ENCODE measurements at regions of chr16 and their contacts with region 1.

Region 1: DNA sequence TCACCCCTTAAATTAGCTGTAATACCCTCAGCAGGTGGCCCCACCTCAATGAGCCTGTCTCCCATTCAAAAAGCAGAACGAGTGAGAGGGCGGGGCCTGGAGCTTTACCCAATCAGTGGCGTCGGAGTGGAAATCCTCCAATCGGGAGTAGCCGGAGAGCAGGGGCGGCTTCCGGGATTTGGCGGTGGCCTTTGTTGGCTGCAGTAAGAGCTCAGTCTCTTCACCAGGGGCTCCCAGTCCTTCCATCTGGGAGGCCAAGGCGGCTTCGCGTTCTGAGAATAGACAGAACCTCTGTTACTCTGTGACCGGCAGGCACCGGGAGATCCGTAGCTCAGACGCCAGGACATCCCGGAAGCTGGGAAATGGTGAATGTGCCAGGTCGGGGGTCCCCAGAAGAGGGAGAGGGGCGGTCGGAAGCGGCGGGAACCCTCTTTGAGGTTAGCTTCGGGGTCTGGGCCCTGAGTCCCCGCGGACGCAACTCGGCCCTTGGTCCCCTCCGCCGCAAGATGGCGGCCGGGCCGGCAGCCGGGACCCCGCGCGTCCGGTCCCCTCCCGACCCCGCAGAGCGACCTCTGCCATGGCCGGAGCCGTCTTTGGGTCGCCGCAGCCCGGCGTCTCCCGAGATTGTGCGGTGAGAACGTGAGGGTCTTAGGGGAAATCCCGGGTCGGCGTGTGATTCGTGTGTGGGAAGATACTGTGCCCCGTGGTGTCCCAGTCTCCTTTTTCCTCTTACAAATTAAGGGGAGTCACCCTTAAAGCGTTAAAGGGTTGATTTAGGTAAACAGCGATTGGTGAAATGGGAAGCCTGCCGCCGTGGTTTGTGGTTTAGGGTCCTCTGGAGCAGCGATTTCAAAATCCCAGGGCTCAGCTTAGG is 160.3 kb upstream of the ZNF267 start:
- DNase-seq: peak; percentile 91
- ATAC-seq: peak; percentile 96
- H3K4me3 ChIP-seq: peak overlapping the region; percentile 66
- H3K27ac ChIP-seq: peak overlapping the region; percentile 70
- H3K4me1 ChIP-seq: peaks cover 6% of the 10 kb centered on the region
- H3K27me3 ChIP-seq: no peaks in the 10 kb centered on the region
- CTCF ChIP-seq: no peak
- POLR2A ChIP-seq: peak; percentile 98
- RAD21 ChIP-seq: no peak

Region 2: DNA sequence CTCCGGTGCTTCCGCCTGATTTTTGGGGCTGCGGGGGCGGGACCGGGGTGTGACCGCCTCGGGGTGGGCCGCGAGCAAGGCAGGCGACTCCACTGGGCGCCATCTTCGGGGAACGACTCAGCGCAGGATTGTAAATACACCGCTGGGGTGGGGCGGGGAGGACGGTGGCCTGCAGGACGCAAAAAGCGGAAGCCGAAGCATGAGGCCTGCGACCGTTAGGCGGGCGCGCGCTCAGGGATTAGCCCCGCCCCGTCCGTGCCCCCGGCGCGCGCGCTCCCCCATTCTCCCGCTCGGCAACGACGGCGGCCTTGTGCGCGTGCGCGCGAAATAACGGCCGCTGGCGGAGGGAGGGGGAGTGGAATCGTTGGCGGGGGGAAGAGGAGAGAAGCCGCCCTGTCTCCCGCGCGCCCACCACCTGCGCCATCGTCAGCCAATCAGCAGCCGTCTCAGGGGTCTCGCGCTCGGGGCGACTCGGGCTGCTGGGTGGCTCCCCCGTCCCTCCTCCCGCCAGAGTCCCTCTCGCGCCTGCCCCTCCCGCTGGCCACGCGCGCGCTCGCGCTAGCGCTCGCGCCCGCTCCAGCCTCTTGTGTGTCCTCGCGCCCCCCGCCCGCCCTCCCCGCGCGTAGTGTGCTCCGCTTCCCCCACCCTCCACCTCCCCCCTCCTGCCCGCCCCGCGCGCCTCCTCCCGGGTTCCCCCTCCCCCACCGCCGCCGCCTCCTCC is 1907.8 kb before region 1 on chr16:
- CTCF ChIA-PET with region 1: no interaction called
- POLR2A ChIA-PET with region 1: no interaction called
- dilution Hi-C with region 1: no loop called
- in situ Hi-C with region 1: no loop called
- intact Hi-C with region 1: no loop called
- DNase-seq: peak; percentile 97
- ATAC-seq: peak; percentile 69
- H3K4me3 ChIP-seq: peak overlapping the region; percentile 79
- H3K27ac ChIP-seq: peak overlapping the region; percentile 96
- H3K4me1 ChIP-seq: peaks cover 16% of the 10 kb centered on the region
- H3K27me3 ChIP-seq: no peaks in the 10 kb centered on the region
- CTCF ChIP-seq: no peak
- POLR2A ChIP-seq: peak; percentile 77; the same call in 1 of the 2 replicates
- RAD21 ChIP-seq: no peak

Region 3: DNA sequence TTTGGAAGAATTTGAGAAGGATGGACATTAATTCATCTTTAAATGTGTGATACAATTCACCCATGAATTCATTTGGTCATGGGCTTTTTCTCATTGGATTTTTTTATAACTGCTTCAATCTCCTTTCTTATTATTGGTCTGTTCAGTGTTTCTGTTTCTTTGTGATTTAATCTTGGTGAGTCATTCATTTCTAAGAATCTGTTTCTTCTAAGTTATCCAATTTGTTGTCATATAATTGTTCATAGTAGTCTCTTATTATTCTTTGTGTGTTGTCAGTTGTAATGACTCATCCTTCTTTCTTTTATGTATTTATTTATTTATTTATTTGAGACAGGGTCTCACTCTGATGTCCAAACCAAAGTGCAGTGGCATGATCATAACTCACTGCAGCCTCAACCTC is 14.2 kb after region 1 on chr16:
- CTCF ChIA-PET with region 1: interaction called, 10 read pairs
- POLR2A ChIA-PET with region 1: interaction called, 3 read pairs
- dilution Hi-C with region 1: no loop called
- in situ Hi-C with region 1: no loop called
- intact Hi-C with region 1: no loop called
- DNase-seq: no peak
- ATAC-seq: no peak
- H3K4me3 ChIP-seq: no peak overlapping the region
- H3K27ac ChIP-seq: no peak overlapping the region
- H3K4me1 ChIP-seq: no peaks in the 10 kb centered on the region
- H3K27me3 ChIP-seq: no peaks in the 10 kb centered on the region
- CTCF ChIP-seq: no peak
- POLR2A ChIP-seq: no peak
- RAD21 ChIP-seq: no peak

Region 4: DNA sequence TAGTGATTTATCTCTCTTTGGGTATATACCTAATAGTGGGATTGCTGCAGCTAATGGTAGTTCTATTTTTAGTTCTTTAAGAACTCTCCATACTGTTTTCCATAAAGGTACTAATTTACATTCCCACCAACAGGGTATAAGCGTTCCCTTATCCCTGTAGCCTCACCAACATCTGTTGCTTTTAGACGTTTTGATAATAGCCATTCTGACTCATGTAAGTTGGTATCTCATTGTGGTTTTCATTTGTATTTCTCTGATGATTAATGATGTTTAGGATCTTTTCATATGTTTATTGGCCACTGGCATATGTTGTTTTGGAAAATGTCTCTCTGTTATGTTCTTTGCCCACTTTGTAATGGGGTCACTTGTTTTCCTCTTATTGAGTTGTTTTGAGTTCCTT is 71.8 kb after region 1 on chr16:
- CTCF ChIA-PET with region 1: no interaction called
- POLR2A ChIA-PET with region 1: no interaction called
- dilution Hi-C with region 1: no loop called
- in situ Hi-C with region 1: no loop called
- intact Hi-C with region 1: no loop called
- DNase-seq: no peak
- ATAC-seq: no peak
- H3K4me3 ChIP-seq: no peak overlapping the region
- H3K27ac ChIP-seq: no peak overlapping the region
- H3K4me1 ChIP-seq: no peaks in the 10 kb centered on the region
- H3K27me3 ChIP-seq: no peaks in the 10 kb centered on the region
- CTCF ChIP-seq: no peak
- POLR2A ChIP-seq: no peak
- RAD21 ChIP-seq: no peak

Measured in IMR-90 (cell line).